GM12878 (cell line): ENCODE measurements at regions of chr6 and their contacts with region 1.

Region 1: GRCh38 chr6:159033160-159034049 is 11.4 kb downstream of the TAGAP start:
- DNase-seq: no peak
- ATAC-seq: peak; percentile 50
- H3K4me3 ChIP-seq: no peak overlapping the region
- H3K27ac ChIP-seq: no peak overlapping the region
- H3K4me1 ChIP-seq: peaks cover 8% of the 10 kb centered on the region
- H3K27me3 ChIP-seq: no peaks in the 10 kb centered on the region
- CTCF ChIP-seq: no peak
- EP300 ChIP-seq: no peak
- POLR2A ChIP-seq: no peak
- RAD21 ChIP-seq: no peak

Region 2: DNA sequence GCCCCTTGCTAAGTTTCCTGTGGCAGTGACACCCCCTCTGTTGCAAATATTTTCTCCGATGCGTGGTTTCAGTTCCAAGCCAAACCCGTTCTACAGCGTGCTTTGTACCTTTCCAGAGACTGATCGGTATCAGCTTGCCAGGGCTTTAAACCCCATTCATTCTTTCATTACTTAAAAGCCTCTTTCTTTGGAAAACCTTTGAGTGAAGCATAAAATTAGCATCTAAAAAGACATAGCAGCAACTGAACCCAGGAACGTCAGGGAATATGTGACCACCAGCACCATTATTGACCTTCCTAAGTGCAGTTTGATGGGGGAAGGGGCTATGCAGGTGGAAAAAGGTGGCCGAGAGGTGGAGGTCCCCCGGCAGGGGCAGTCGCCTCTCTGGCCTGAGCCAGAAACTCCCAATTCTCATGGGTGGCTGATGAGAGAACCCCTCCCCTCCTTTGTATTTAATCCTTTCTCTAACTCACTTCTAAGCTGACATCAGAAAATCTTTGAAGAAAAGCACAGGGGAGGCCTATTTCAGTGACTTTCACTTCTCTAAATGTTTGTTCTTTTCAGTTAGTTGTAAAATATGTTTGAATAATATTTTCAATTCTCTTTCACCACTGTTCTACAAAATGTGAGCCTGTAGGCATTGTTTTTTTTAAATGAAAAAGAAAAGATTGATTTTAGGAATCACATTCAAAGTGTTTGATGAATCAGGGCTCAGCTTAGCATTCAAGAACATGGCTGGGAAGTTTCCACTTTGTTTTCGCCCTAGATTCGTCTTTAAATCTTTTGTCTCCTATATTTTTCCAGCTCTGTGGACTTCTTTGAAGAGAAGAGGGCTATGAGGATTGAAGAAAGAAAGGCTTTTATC is 122.7 kb before region 1 on chr6:
- CTCF ChIA-PET with region 1: no interaction called
- POLR2A ChIA-PET with region 1: no interaction called
- RAD21 ChIA-PET with region 1: no interaction called
- SMC1A ChIA-PET with region 1: no interaction called
- in situ Hi-C with region 1: no loop called
- intact Hi-C with region 1: no loop called
- DNase-seq: peak; percentile 54
- ATAC-seq: peak; percentile 90
- H3K4me3 ChIP-seq: peak overlapping the region; percentile 56
- H3K27ac ChIP-seq: peak overlapping the region; percentile 99
- H3K4me1 ChIP-seq: peaks cover 33% of the 10 kb centered on the region
- H3K27me3 ChIP-seq: no peaks in the 10 kb centered on the region
- CTCF ChIP-seq: no peak
- EP300 ChIP-seq: peak; percentile 36 to 78; a peak in 3 of 4 replicates
- POLR2A ChIP-seq: peak; percentile 51; the same call in 1 of the 2 replicates
- RAD21 ChIP-seq: peak; percentile 35; the same call in 1 of the 2 replicates

Region 3: GRCh38 chr6:159017757-159018559 is 15.4 kb before region 1 on chr6:
- CTCF ChIA-PET with region 1: interaction called, 4 read pairs
- POLR2A ChIA-PET with region 1: interaction called, 4 read pairs
- RAD21 ChIA-PET with region 1: interaction called, 6 read pairs
- SMC1A ChIA-PET with region 1: interaction called, 194 read pairs
- in situ Hi-C with region 1: no loop called
- intact Hi-C with region 1: no loop called
- DNase-seq: no peak
- ATAC-seq: peak; percentile 87
- H3K4me3 ChIP-seq: no peak overlapping the region
- H3K27ac ChIP-seq: no peak overlapping the region
- H3K4me1 ChIP-seq: peaks cover 8% of the 10 kb centered on the region
- H3K27me3 ChIP-seq: no peaks in the 10 kb centered on the region
- CTCF ChIP-seq: no peak
- EP300 ChIP-seq: no peak
- POLR2A ChIP-seq: no peak
- RAD21 ChIP-seq: no peak